ENCODE measurements at regions of chr13 and their contacts with region 1.

Region 1: DNA sequence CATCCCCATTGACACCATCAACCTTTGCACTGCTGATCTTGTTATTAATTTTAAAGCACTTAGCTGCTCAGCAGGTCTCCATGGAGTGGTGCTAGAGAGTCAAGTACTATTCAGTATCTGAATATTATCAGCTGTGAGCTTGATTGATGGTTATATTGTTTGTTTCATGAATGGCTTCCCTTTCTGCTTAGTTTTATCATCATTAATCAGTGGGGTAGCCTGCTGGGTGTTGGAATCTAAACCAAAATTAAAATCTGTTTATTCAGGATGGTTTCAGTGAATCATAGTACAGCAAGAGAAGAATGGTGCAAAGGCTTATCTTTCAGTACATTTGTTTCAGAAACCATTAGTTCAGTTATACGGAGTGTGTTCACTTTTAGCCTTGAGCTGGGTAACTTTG is 42.5 kb upstream of the SCEL start:
- DNase-seq: peak in 22 of 42 donors; percentile 9 to 72 (median 38)

Region 2: GRCh38 chr13:77377016-77377415 is 116.0 kb before region 1 on chr13:
- intact Hi-C with region 1: no loop called
- DNase-seq: peak in 10 of 42 donors; percentile 19 to 68 (median 34)

Region 3: DNA sequence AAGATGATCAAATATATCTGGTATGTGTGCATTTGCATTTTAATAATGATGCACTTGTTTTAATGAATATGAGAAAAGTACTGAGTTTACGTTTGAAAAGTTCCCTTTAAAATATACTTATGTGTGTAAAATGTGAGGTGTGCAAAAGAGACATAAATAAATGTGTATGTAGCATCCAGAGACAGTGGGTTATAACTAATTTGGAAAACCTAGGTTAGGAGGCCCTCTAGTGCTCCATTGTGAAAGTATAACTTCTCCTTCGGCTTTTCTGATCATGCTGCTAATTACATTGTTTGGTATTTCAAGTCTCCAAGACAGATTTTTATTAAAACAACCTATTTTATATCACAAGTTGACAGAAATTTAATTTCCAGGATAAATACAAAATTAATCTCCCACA is 72.7 kb after region 1 on chr13:
- intact Hi-C with region 1: loop called (anchors 5 kb)
- DNase-seq: peak in 4 of 42 donors; percentile 9 to 60 (median 18)

Measured in head of caudate nucleus (tissue), 42 donors.